Naive thymus-derived CD8-positive, alpha-beta T cell (primary cell): ENCODE measurements at regions of chr12 and their contacts with region 1.

Region 1: GRCh38 chr12:47221256-47222023 is 141.7 kb upstream of the AMIGO2 start:
- DNase-seq: no peak
- ATAC-seq: no peak
- H3K4me3 Mint-ChIP-seq: peak overlapping the region; percentile 57 to 96 (median 80)
- H3K27ac Mint-ChIP-seq: peak overlapping the region; percentile 65 to 98 (median 84)
- H3K4me1 Mint-ChIP-seq: peaks cover 39 to 83% (median 60%) of the 10 kb centered on the region in 4 donors
- H3K27me3 Mint-ChIP-seq: no peaks in the 10 kb centered on the region

Region 2: DNA sequence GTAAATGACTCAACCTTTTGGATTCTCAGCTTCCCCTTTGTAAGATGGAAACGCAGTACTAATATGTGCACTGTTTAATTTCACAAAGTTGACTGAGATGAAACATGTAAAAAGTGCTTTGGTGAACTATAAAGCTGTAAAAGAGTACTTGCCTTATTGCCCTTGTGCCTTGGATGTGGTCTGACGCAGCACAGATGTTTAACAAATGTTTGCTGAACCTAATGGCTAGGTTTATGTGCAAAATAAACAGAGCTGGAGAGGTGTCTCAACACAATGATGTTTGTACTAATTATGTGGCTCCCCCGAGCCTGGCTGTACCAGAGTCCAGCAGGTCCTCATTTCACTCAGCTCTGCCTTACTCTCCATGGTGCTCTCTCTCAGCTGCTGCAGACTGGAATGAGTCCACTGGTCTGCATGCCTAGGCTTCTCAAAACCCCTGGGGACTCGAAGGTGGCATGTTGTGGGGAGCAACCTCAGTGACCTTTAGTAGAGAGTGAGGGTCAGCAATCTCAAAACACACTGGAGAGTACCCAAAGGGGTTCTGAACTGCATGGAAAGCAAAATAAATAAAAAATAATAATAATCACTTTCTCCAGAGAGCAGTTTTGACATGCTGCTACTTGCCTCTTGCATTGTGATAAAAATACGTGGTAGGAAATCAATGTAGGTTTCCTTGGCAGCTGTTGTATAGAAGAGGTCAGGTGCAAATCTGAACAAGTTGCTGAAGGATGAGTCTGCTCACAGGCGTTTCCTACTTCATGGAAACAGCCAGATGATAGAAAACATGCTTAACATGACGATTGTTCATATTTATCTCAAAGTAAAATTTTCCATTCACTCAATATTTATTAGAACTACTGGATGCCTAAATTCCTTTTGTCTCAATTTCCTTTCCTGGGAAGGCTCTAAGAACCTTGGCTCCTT is 133.2 kb before region 1 on chr12:
- POLR2A ChIA-PET with region 1: interaction called, 11 read pairs
- DNase-seq: no peak
- ATAC-seq: no peak
- H3K4me3 Mint-ChIP-seq: no peak overlapping the region
- H3K27ac Mint-ChIP-seq: peak overlapping the region in 8 of 10 donors; percentile 2 to 67 (median 23)
- H3K4me1 Mint-ChIP-seq: peaks cover 16 to 45% (median 34%) of the 10 kb centered on the region in 4 donors
- H3K27me3 Mint-ChIP-seq: no peaks in the 10 kb centered on the region